K562 (cell line): ENCODE measurements at regions of chr11 and their contacts with region 1.

Region 1: GRCh38 chr11:77187776-77188632 is 60.0 kb downstream of the MYO7A start:
- DNase-seq: peak; percentile 80 to 85 (median 82)
- ATAC-seq: peak; percentile 82
- H3K4me3 ChIP-seq: no peak overlapping the region
- H3K27ac ChIP-seq: no peak overlapping the region
- H3K4me1 ChIP-seq: peaks cover 4 to 29% of the 10 kb centered on the region in 2 experiments; a peak in 3 of 5 replicates
- H3K27me3 ChIP-seq: peaks cover 9 to 52% of the 10 kb centered on the region in 2 experiments; a peak in 4 of 5 replicates
- CTCF ChIP-seq: peak; percentile 89 to 94 (median 90)
- EP300 ChIP-seq: no peak
- POLR2A ChIP-seq: no peak
- RAD21 ChIP-seq: peak; percentile 82 to 89

Region 2: GRCh38 chr11:77127232-77127911 is 60.6 kb before region 1 on chr11:
- CTCF ChIA-PET with region 1: interaction called, 23 read pairs
- POLR2A ChIA-PET with region 1: interaction called, 3 read pairs
- in situ Hi-C with region 1: no loop called
- intact Hi-C with region 1: loop called (anchors 1 kb)
- DNase-seq: peak; percentile 59 to 85 (median 84)
- ATAC-seq: peak; percentile 91
- H3K4me3 ChIP-seq: peak overlapping the region; percentile 14
- H3K27ac ChIP-seq: no peak overlapping the region
- H3K4me1 ChIP-seq: peaks cover 0 to 20% of the 10 kb centered on the region in 2 experiments; a peak in 2 of 5 replicates
- H3K27me3 ChIP-seq: peaks cover 4 to 41% of the 10 kb centered on the region in 2 experiments; a peak in 4 of 5 replicates
- CTCF ChIP-seq: peak; percentile 97 to 99 (median 98)
- EP300 ChIP-seq: no peak
- POLR2A ChIP-seq: no peak
- RAD21 ChIP-seq: peak; percentile 91 to 93

Region 3: DNA sequence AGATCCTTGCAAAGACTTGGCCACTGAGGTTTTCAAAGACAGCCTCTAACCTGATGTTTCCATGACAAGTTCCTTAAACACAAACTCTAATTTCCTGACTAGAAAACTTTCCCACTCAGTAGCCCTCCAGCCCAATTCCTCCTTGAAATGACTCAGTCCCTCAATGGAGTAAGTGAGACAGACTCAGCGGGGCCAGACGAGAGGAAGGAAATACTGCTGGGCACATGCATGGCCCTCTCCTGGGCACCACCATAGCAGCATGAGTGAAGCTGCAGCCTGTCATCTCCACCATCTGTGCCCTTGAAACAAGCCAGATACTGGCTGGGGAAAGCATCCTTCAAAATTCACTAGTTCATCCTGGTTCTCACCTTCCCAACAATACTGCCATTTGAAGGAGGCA is 189.7 kb after region 1 on chr11:
- CTCF ChIA-PET with region 1: no interaction called
- POLR2A ChIA-PET with region 1: no interaction called
- in situ Hi-C with region 1: no loop called
- intact Hi-C with region 1: loop called (anchors 10 kb)
- DNase-seq: no peak
- ATAC-seq: no peak
- H3K4me3 ChIP-seq: no peak overlapping the region
- H3K27ac ChIP-seq: no peak overlapping the region
- H3K4me1 ChIP-seq: no peaks in the 10 kb centered on the region
- H3K27me3 ChIP-seq: no peaks in the 10 kb centered on the region
- CTCF ChIP-seq: no peak
- EP300 ChIP-seq: no peak
- POLR2A ChIP-seq: no peak
- RAD21 ChIP-seq: no peak

Region 4: GRCh38 chr11:77619576-77620198 is 431.7 kb after region 1 on chr11:
- CTCF ChIA-PET with region 1: interaction called, 11 read pairs
- POLR2A ChIA-PET with region 1: no interaction called
- in situ Hi-C with region 1: no loop called
- intact Hi-C with region 1: no loop called
- DNase-seq: peak in 1 of 4 experiments; percentile 64
- ATAC-seq: peak; percentile 77
- H3K4me3 ChIP-seq: no peak overlapping the region
- H3K27ac ChIP-seq: no peak overlapping the region
- H3K4me1 ChIP-seq: no peaks in the 10 kb centered on the region
- H3K27me3 ChIP-seq: no peaks in the 10 kb centered on the region
- CTCF ChIP-seq: peak; percentile 35 to 78 (median 64); a peak in 5 of 6 replicates
- EP300 ChIP-seq: no peak
- POLR2A ChIP-seq: no peak
- RAD21 ChIP-seq: peak; percentile 71 to 75